MCF 10A (cell line): ENCODE measurements at regions of chr5 and their contacts with region 1.

Region 1: DNA sequence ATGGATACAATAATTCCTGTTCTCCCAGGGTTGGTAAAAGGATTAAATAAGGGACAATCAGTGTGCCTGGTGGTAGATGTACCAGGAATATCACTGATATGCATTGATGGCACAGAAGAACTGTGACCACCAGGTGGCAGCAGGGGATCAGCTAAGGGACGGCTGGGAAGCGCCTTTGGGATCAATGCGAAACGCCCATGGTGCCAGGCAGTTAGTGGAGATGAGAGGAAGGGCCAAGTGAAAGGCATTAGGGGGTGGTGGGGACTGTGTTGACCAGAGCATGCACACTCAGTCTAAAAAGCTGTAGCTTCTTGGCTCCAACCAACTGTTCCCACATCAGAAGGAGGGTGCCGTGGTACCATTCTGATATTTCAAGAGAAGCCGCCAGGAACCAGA is 55.6 kb downstream of the ARHGEF37 start:
- DNase-seq: peak; percentile 90
- H3K4me3 Mint-ChIP-seq: no peak overlapping the region
- H3K27ac Mint-ChIP-seq: no peak overlapping the region
- H3K4me1 Mint-ChIP-seq: peaks cover 47% of the 10 kb centered on the region
- H3K27me3 Mint-ChIP-seq: no peaks in the 10 kb centered on the region
- CTCF ChIP-seq: peak; percentile 98

Region 2: GRCh38 chr5:149404746-149405549 is 231.9 kb before region 1 on chr5:
- CTCF ChIA-PET with region 1: no interaction called
- POLR2A ChIA-PET with region 1: no interaction called
- intact Hi-C with region 1: no loop called
- DNase-seq: no peak
- H3K4me3 Mint-ChIP-seq: no peak overlapping the region
- H3K27ac Mint-ChIP-seq: no peak overlapping the region
- H3K4me1 Mint-ChIP-seq: no peaks in the 10 kb centered on the region
- H3K27me3 Mint-ChIP-seq: peaks cover 11% of the 10 kb centered on the region
- CTCF ChIP-seq: no peak

Region 3: GRCh38 chr5:149422366-149423048 is 214.3 kb before region 1 on chr5:
- CTCF ChIA-PET with region 1: no interaction called
- POLR2A ChIA-PET with region 1: no interaction called
- intact Hi-C with region 1: no loop called
- DNase-seq: no peak
- H3K4me3 Mint-ChIP-seq: no peak overlapping the region
- H3K27ac Mint-ChIP-seq: no peak overlapping the region
- H3K4me1 Mint-ChIP-seq: no peaks in the 10 kb centered on the region
- H3K27me3 Mint-ChIP-seq: peaks cover 16% of the 10 kb centered on the region
- CTCF ChIP-seq: no peak

Region 4: DNA sequence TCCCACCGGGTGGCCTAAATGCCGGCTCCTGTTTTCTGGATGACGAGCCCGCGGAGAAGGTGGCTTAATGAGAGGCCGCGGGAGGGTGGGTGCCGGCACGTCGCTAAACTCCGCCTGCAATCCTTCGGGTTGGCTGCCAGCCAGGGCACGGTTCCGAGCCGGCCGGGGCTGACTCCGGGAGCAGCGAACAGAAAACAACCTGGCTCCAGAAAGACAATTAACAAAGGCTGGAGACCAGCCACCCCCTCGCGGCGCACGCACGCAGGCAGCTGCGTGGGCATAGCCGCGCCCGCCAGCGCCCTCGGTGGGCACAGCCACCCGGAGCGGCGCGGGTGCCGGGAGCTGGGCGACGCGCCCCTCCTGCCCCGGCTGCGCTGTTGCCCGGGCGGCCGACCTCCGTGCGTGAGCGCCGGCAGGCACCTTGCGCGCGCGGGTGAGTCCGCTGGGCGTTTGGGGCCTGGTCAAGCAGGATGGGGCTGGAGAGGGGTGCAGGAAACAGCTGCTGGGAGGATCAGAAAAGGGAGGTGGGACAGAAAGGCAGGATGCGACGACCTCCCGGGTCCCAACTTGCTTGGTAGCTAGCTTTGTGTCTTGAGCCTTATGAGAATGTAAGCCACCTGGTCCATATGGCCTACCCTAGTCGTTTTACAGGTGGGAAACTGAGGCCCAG is 55.5 kb before region 1 on chr5 and contains the start of gene ARHGEF37:
- CTCF ChIA-PET with region 1: interaction called, 4 read pairs
- POLR2A ChIA-PET with region 1: interaction called, 45 read pairs
- intact Hi-C with region 1: no loop called
- DNase-seq: peak; percentile 83
- H3K4me3 Mint-ChIP-seq: peak within 1 kb of the TSS; percentile 75
- H3K27ac Mint-ChIP-seq: peak within 1 kb of the TSS; percentile 76
- H3K4me1 Mint-ChIP-seq: peaks cover 26% of the 10 kb centered on the region
- H3K27me3 Mint-ChIP-seq: no peaks in the 10 kb centered on the region
- CTCF ChIP-seq: no peak
- total RNA-seq, gene ARHGEF37: 3.9 and 5.1 TPM in 2 replicates

Region 5: DNA sequence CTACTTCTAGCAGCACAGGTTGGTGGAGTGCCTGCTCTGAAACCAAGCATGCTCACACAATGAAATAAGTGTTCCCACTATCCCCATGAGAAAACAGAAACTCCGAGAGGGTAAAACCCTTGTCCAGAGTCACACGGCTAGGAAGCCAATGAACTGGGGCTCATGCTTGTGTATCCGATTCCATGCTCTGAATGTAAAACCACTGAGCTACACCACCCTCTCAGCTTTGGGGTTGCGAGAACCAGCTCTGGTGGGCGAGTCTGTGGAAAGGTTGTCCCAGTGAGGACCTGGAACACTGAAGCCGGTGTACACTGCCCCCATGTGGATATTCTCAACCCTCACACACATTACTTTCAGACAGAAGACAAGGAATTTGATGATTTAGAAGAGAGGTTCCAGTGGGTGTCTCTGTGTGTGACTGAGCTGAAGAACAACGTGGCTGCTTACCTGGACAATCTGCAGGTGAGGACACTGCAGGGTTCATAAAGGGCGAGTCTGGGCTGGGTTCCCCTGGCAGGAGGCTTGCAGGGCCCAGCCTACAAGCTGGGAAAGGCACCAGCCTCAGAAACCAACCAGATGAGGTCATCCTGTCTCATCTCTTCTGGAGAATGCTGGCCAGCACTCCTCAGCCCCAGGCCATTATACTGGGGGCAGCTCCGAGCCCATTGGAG is 18.1 kb before region 1 on chr5:
- CTCF ChIA-PET with region 1: interaction called, 101 read pairs
- POLR2A ChIA-PET with region 1: interaction called, 53 read pairs
- intact Hi-C with region 1: no loop called
- DNase-seq: peak; percentile 86
- H3K4me3 Mint-ChIP-seq: no peak overlapping the region
- H3K27ac Mint-ChIP-seq: peak overlapping the region; percentile 28
- H3K4me1 Mint-ChIP-seq: peaks cover 16% of the 10 kb centered on the region
- H3K27me3 Mint-ChIP-seq: no peaks in the 10 kb centered on the region
- CTCF ChIP-seq: peak; percentile 92

Region 6: GRCh38 chr5:149740866-149741459 is 104.1 kb after region 1 on chr5:
- CTCF ChIA-PET with region 1: interaction called, 10 read pairs
- POLR2A ChIA-PET with region 1: no interaction called
- intact Hi-C with region 1: no loop called
- DNase-seq: no peak
- H3K4me3 Mint-ChIP-seq: no peak overlapping the region
- H3K27ac Mint-ChIP-seq: no peak overlapping the region
- H3K4me1 Mint-ChIP-seq: peaks cover 16% of the 10 kb centered on the region
- H3K27me3 Mint-ChIP-seq: no peaks in the 10 kb centered on the region
- CTCF ChIP-seq: no peak

Region 7: DNA sequence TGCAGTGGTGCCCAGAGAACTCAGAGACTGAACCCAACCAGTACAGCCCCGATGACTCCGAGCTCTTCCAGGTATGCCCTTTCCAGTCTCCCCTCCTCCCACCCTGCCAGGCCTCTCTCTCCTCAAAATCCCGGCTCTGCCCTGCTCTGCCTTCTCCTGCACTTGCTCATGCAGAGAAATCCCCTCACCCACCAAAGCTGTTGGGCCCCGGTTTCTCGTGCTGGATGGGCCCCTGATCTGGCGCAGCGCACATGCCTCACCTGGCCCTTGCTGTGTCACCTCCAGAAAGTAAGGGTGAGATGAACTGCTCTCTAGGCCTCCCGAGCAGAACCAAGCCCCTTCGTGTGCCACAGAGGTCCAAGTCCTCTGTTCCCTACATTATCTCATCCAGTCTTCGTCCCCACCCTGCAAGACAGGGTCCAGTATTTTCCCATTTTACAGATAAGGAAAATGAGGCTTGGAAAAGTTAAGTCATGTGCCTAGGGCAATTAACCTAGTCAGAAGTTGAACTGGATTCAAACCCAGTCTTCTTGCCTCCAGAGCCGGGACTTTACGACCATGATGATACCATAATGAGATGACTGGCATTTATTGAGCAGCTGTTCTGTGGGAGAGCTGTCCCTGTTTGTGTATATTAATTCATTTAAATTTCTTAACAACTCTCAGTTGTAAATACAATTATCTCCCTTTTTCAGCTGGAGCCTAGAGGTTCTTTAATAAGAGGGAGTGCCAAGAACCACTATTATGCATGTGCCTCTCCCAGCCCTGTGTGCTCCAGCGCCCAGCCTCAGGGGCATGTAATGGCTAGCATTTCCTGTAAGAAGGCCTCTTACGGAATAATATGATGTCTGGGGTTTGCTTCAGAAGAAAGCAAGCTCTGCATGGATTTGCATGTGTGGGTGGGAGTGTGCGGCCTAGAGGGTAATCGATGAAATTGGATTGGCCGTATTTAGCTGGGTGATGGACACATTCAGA is 184.0 kb after region 1 on chr5:
- CTCF ChIA-PET with region 1: interaction called, 300 read pairs
- POLR2A ChIA-PET with region 1: interaction called, 5 read pairs
- intact Hi-C with region 1: no loop called
- DNase-seq: no peak
- H3K4me3 Mint-ChIP-seq: no peak overlapping the region
- H3K27ac Mint-ChIP-seq: no peak overlapping the region
- H3K4me1 Mint-ChIP-seq: peaks cover 6% of the 10 kb centered on the region
- H3K27me3 Mint-ChIP-seq: no peaks in the 10 kb centered on the region
- CTCF ChIP-seq: no peak

Region 8: DNA sequence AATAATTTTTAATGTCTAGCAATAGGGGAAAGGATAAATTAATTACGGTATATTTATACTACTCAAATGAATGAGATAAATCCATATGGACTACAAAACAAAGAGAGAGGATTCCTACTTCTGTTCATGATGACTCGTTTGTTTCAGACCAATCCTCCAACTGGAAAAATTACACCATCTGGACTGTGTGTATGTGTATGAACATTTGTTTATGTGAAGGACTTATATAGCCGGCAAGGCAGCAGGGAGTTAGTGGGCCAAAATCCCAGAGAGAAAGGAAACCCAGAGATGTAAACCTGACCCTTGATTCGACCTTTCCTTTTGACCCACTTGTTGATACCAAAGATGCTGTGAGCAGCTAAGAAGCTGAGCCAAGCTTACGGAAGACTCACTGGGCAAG is 287.6 kb after region 1 on chr5:
- CTCF ChIA-PET with region 1: no interaction called
- POLR2A ChIA-PET with region 1: no interaction called
- intact Hi-C with region 1: no loop called
- DNase-seq: no peak
- H3K4me3 Mint-ChIP-seq: no peak overlapping the region
- H3K27ac Mint-ChIP-seq: peak overlapping the region; percentile 11
- H3K4me1 Mint-ChIP-seq: peaks cover 27% of the 10 kb centered on the region
- H3K27me3 Mint-ChIP-seq: no peaks in the 10 kb centered on the region
- CTCF ChIP-seq: no peak

Region 9: DNA sequence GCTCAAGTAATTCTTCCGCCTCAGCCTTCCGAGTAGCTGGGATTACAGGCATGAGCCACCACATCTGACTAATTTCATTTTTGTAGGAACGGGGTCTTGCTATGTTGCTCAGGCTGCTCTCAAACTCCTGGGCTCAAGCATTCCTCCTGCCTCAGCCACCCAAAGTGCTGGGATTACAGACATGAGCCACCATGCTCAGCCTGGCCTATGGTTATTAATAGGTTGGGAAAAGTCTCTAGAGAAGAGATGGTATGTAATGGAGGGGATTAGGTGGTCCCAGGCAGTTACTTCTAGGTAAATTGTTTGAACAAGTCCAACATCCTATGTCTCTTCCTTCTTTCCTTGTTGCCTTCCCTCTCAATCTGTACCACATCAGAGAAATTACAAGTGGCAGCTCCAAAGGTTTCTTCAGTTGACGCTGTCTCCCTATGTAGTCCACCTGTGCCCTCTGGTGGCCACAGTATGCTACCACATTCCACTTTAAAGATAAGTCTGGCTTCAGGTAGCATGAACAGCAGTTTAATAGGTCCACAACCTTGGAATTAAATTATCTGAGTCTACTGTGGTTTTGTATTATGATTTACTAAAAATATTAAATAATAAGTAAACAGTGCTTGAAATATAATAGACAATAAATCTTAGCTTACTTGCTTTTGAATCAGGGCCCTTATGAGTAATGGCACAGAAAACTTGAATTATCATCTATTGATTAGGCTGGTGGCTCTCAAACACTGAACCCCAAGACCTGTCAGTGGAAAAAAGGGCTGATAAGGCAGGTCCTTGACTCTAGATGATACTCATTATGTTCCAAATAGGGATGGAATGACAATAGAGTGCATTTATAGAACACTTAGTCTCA is 353.9 kb after region 1 on chr5:
- CTCF ChIA-PET with region 1: interaction called, 12 read pairs
- POLR2A ChIA-PET with region 1: no interaction called
- intact Hi-C with region 1: loop called (anchors 1 kb)
- DNase-seq: peak; percentile 91
- H3K4me3 Mint-ChIP-seq: no peak overlapping the region
- H3K27ac Mint-ChIP-seq: no peak overlapping the region
- H3K4me1 Mint-ChIP-seq: peaks cover 10% of the 10 kb centered on the region
- H3K27me3 Mint-ChIP-seq: no peaks in the 10 kb centered on the region
- CTCF ChIP-seq: peak; percentile 96